Heart left ventricle (tissue), 16 donors: ENCODE measurements at regions of chr6 and their contacts with region 1.

Region 1: GRCh38 chr6:11172501-11173332 is 59.8 kb downstream of the NEDD9 start:
- DNase-seq: peak; percentile 62 to 84 (median 66)
- ATAC-seq: peak in 2 of 4 donors; percentile 55 to 59
- H3K4me3 ChIP-seq: peak overlapping the region in 1 of 12 donors; percentile 11
- H3K27ac ChIP-seq: no peak overlapping the region
- H3K4me1 ChIP-seq: peaks cover 0 to 14% (median 6%) of the 10 kb centered on the region in 12 donors
- H3K27me3 ChIP-seq: no peaks in the 10 kb centered on the region
- CTCF ChIP-seq: peak; percentile 75 to 92 (median 90)
- POLR2A ChIP-seq: no peak

Region 2: GRCh38 chr6:11218538-11219399 is 46.1 kb after region 1 on chr6:
- intact Hi-C with region 1: loop called in 1 of 10 experiments (anchors 5 kb)
- DNase-seq: peak in 4 of 5 donors; percentile 74 to 85 (median 81)
- ATAC-seq: peak; percentile 73 to 92 (median 82)
- H3K4me3 ChIP-seq: peak overlapping the region in 5 of 12 donors; percentile 0 to 13 (median 2)
- H3K27ac ChIP-seq: peak overlapping the region; percentile 28 to 93 (median 82)
- H3K4me1 ChIP-seq: peaks cover 5 to 100% (median 77%) of the 10 kb centered on the region in 12 donors
- H3K27me3 ChIP-seq: no peaks in the 10 kb centered on the region
- CTCF ChIP-seq: peak in 1 of 12 donors; percentile 18
- POLR2A ChIP-seq: peak in 1 of 2 donors; percentile 44